Activated CD4-positive, alpha-beta memory T cell treated with anti-CD3 and anti-CD28 coated beads, Interleukin-2, amount 10 ng/mL, durations not matched to agents 7 days and 5 days (primary cell): ENCODE measurements at regions of chr2 and their contacts with region 1.

Region 1: GRCh38 chr2:239602290-239603282 is 201.8 kb upstream of the HDAC4 start:
- DNase-seq: peak; percentile 77
- H3K4me3 Mint-ChIP-seq: peak overlapping the region; percentile 51
- H3K27ac Mint-ChIP-seq: peak overlapping the region; percentile 91
- H3K4me1 Mint-ChIP-seq: peaks cover 38% of the 10 kb centered on the region
- H3K27me3 Mint-ChIP-seq: peaks cover 27% of the 10 kb centered on the region

Region 2: DNA sequence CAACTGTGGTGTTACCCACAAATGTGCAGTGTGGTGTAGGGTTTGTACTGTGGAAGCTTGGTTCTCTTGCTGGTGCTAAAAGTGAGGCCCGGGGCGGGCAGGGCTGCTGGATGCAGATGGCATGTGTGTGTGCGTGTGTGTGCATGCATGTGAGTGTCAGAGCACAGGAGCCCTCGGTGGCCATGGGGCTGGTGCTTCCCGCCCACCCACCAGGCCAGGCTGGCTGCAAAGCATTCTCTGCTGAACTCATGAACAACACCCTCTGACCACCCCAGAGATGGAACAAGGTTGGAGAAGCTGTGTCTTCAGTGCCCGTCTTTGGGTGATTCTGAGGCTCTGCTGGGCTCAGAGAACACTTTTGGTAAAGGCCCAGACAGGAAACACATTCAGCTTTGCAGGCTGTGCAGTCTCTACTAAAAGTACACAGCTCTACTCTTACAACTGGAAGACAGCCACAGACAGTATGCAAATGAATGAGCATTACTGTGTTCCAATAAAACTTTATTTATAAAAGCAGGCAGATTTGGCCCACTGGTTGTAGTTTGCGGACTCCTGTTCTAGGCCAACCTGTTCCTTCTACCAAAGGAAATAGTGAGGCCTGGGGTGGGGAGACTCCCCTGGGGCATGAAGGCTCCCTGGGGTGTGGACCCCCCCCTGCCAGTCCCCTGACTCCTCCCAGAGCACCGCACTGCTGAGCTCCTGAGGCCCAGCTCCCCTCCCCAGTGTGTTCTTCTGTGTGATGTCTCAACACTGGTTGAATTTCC is 23.6 kb after region 1 on chr2:
- CTCF ChIA-PET with region 1: interaction called, 5 read pairs
- POLR2A ChIA-PET with region 1: interaction called, 14 read pairs
- DNase-seq: peak; percentile 47
- H3K4me3 Mint-ChIP-seq: no peak overlapping the region
- H3K27ac Mint-ChIP-seq: peak overlapping the region; percentile 83
- H3K4me1 Mint-ChIP-seq: peaks cover 60% of the 10 kb centered on the region
- H3K27me3 Mint-ChIP-seq: no peaks in the 10 kb centered on the region

Region 3: DNA sequence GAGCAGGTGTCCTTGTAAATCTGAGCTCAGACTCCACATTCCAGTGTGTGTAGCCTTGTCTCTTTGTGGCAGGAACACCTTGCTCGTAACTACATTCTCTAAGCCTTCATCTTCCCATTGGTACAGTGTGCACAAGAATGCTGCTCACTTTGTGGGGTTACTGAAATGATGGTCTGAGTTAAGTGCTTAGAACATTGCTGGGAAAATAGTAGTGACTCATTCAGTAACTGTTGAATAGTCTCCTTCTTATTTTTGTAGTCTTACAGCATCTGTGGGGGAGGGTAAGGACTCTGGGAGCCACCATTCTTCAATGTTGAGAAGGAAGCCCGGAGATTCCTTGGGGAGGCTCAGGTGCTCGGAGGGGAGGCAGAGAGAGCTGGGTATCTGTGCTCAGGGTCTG is 34.2 kb after region 1 on chr2:
- CTCF ChIA-PET with region 1: no interaction called
- POLR2A ChIA-PET with region 1: no interaction called
- DNase-seq: no peak
- H3K4me3 Mint-ChIP-seq: no peak overlapping the region
- H3K27ac Mint-ChIP-seq: no peak overlapping the region
- H3K4me1 Mint-ChIP-seq: no peaks in the 10 kb centered on the region
- H3K27me3 Mint-ChIP-seq: no peaks in the 10 kb centered on the region